H1 (cell line): ENCODE measurements at regions of chr5 and their contacts with region 1.

Region 1: DNA sequence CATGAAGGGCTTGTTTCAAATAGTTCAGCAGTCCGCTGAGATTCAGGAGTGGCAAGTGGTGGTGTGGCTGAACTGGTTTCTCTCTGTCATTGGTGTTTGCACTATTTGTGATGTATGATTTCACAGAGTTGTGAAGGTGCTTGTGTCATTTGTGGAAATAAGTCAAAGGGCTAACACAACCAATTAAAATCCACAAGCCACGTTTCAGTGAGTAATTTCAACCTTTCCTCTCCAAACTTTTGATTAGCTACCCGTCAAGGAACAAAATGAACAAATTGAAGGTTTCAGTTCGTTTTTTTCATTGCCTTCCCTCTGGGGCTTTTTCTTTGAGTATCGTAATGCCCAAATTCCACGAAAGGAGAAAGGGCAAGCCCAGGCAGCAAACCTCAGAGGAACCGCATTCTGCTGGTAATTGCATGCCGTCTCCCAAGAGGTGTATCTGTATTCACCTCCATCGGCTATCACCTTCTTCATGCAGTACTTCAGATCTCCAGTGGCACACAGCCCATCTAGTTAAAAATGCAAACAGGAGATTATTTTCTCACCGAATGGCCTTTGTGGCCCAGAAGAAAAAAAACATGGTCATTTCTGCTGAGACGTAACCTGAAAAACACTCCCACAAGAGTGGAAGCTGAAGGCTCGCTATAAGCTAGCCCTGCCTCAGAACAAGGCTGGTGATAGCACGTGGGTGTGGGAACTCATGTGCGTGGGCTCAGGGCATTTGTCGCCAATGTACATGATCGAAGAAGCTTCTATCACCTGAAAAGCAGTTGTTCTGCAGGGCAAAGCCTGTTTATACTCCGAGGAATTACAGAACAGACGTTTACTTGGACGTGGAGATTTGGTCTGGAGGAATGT is 197.1 kb downstream of the NR3C1 start:
- DNase-seq: no peak
- H3K4me3 ChIP-seq: no peak overlapping the region
- H3K27ac ChIP-seq: no peak overlapping the region
- H3K4me1 ChIP-seq: peaks cover 0 to 4% (median 0%) of the 10 kb centered on the region in 4 experiments; a peak in 1 of 7 replicates
- H3K27me3 ChIP-seq: no peaks in the 10 kb centered on the region
- CTCF ChIP-seq: no peak
- EP300 ChIP-seq: no peak
- POLR2A ChIP-seq: no peak
- RAD21 ChIP-seq: no peak

Region 2: DNA sequence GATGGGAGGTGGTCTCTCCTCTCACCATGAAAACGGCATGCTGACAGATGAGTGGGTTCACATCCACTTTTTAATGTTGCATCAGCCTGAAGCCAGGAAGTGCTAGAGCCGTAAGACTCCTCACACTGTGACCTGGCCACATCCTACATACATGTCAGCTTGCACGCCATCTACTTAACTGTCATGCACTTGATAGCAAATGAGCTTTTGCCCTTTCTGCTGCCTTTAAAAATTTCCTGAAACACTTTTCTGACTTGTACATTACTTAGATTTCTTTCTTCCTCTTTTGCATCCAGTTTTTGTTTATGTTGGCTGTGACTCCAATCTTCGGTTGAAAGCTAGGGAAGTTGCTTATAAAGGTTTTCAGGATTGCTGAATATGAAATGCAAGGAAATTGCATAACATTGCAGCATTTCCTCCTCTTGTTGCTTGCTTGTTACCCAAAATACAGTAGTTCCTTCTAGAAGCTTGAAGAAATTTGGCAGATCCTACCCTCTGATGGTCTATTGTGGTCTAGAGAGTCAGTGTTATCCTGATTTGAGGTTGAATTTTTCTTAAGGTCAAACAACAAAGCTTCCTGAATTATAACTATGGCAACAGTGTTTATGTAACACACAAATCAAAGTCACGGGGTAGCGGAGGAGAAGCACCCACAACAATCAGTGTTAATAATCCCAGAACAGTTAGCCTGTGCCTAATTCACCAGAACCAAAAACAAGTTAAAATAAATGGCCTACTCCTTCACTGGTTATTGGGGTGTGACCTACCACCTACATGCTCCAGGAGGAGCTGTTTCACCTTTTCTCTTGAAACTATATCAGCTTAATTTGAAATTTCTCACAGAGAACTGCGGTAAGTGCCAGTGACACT is 203.7 kb before region 1 on chr5:
- CTCF ChIA-PET with region 1: interaction called, 10 read pairs
- POLR2A ChIA-PET with region 1: no interaction called
- DNase-seq: no peak
- H3K4me3 ChIP-seq: no peak overlapping the region
- H3K27ac ChIP-seq: no peak overlapping the region; the same call in 1 of the 2 replicates
- H3K4me1 ChIP-seq: peaks cover 0 to 3% (median 3%) of the 10 kb centered on the region in 4 experiments; a peak in 4 of 7 replicates
- H3K27me3 ChIP-seq: no peaks in the 10 kb centered on the region
- CTCF ChIP-seq: peak in 2 of 3 experiments; percentile 42 to 68; a peak in 3 of 4 replicates
- EP300 ChIP-seq: no peak
- POLR2A ChIP-seq: no peak
- RAD21 ChIP-seq: peak; percentile 68 to 71

Region 3: DNA sequence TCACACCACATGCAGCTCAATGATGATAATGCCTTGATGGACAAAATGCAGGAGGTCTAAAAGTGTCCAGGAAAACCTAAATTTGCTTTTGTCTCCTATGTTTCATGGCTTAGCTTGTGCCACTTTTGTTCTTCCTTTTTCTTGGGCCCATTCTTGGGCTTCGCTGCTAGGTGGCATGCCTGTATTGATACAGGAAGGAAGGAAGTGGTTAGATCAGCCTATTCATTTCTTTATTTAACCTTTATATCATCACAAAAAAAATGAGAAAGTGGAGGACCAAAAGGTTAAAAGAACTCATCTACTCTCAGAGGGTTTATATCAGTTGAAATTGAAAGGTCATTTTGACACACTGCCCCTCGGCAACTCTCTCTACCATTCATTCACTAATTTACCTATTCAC is 176.1 kb before region 1 on chr5:
- CTCF ChIA-PET with region 1: no interaction called
- POLR2A ChIA-PET with region 1: no interaction called
- DNase-seq: no peak
- H3K4me3 ChIP-seq: no peak overlapping the region
- H3K27ac ChIP-seq: no peak overlapping the region
- H3K4me1 ChIP-seq: no peaks in the 10 kb centered on the region; a peak in 1 of 7 replicates
- H3K27me3 ChIP-seq: no peaks in the 10 kb centered on the region; a peak in 1 of 7 replicates
- CTCF ChIP-seq: no peak
- EP300 ChIP-seq: no peak
- POLR2A ChIP-seq: no peak
- RAD21 ChIP-seq: no peak

Region 4: DNA sequence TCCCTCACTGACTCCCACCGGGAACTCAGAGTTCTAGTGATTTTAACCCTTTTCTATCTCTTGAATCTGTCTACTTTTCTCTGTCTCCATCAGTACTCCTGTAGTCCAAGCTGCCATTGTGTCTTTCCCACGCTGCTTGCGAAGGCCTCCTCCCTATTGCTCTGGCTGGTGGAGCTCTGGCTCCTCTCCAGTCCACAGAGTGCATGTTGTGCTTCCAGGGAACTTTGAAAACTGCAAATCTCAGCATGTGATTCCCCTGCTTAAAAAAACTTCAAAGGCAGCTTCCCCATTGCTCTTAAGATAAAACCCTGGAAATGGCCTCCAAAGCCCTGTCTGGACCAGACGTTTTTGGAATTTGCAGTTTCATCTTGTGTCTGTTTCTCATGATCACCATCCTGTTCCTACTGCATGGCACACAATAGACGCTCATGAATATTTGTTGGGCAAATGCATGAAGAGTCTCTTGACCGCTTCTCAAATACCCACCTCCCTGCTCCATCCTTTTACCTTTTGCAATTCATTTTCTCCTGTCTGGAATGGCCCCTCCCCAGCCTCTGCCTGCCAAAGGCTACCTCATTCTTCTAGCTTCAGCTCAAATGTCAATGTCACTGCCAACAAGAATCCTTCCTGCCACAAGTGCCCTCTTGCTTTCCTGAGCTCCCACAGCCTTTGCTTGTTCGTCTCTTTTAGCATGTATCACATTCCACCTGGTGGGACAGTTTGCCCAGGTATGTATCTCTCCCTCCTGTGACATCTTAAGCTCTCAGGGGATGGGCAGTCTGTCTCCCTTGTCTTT is 143.1 kb before region 1 on chr5:
- CTCF ChIA-PET with region 1: no interaction called
- POLR2A ChIA-PET with region 1: no interaction called
- DNase-seq: no peak
- H3K4me3 ChIP-seq: no peak overlapping the region
- H3K27ac ChIP-seq: no peak overlapping the region
- H3K4me1 ChIP-seq: peaks cover 0 to 4% (median 1%) of the 10 kb centered on the region in 4 experiments; a peak in 3 of 7 replicates
- H3K27me3 ChIP-seq: no peaks in the 10 kb centered on the region
- CTCF ChIP-seq: no peak
- EP300 ChIP-seq: no peak
- POLR2A ChIP-seq: no peak
- RAD21 ChIP-seq: no peak

Region 5: DNA sequence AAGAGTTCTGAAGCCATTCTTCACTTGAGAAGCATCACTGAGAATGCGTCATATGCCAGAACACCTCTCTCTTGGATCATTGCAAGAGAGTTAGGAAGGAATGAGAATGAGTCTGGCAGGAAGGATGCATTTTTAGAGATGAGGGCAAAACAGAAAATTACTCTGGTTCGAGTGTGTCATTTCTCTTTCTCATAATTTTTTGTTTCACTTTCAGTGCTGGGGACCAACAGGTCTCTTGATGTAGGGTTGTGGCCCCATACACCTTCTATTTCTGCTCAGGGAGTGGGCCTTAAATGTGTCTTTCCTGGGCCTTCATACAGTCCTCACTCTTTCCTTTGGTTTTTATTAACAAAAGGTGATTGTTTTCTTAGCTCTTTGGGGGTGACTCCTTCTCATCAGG is 105.3 kb before region 1 on chr5:
- CTCF ChIA-PET with region 1: no interaction called
- POLR2A ChIA-PET with region 1: no interaction called
- DNase-seq: no peak
- H3K4me3 ChIP-seq: no peak overlapping the region
- H3K27ac ChIP-seq: no peak overlapping the region
- H3K4me1 ChIP-seq: no peaks in the 10 kb centered on the region
- H3K27me3 ChIP-seq: no peaks in the 10 kb centered on the region
- CTCF ChIP-seq: no peak
- EP300 ChIP-seq: no peak
- POLR2A ChIP-seq: no peak
- RAD21 ChIP-seq: no peak

Region 6: GRCh38 chr5:143217065-143217803 is 10.8 kb after region 1 on chr5:
- CTCF ChIA-PET with region 1: interaction called, 33 read pairs
- POLR2A ChIA-PET with region 1: no interaction called
- DNase-seq: no peak
- H3K4me3 ChIP-seq: no peak overlapping the region
- H3K27ac ChIP-seq: no peak overlapping the region
- H3K4me1 ChIP-seq: peaks cover 0 to 14% (median 5%) of the 10 kb centered on the region in 4 experiments; a peak in 3 of 7 replicates
- H3K27me3 ChIP-seq: no peaks in the 10 kb centered on the region
- CTCF ChIP-seq: no peak
- EP300 ChIP-seq: no peak
- POLR2A ChIP-seq: no peak
- RAD21 ChIP-seq: peak; percentile 25 to 43; a peak in 2 of 4 replicates

Region 7: DNA sequence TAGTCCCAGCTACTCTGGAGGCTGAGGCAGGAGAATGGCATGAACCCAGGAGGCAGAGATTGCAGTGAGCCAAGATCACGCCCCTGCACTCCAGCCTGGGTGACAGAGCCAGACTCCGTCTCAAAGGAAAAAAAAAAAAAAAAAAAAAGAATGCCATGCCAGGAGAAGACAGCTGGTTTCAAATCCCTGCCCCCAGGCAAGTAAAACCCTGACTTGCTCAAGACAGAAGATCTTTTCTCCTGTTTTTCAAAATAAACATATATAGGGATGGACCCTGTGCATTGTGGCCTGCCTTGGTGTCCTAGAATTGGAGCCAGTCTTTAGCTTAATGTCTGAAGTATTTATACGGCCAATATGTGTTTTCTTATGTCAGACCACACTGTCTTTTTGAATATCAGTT is 19.9 kb after region 1 on chr5:
- CTCF ChIA-PET with region 1: interaction called, 10 read pairs
- POLR2A ChIA-PET with region 1: no interaction called
- DNase-seq: no peak
- H3K4me3 ChIP-seq: no peak overlapping the region
- H3K27ac ChIP-seq: no peak overlapping the region
- H3K4me1 ChIP-seq: peaks cover 0 to 7% (median 3%) of the 10 kb centered on the region in 4 experiments; a peak in 4 of 7 replicates
- H3K27me3 ChIP-seq: no peaks in the 10 kb centered on the region
- CTCF ChIP-seq: no peak
- EP300 ChIP-seq: no peak
- POLR2A ChIP-seq: no peak
- RAD21 ChIP-seq: no peak